PC-9 (cell line): ENCODE measurements at regions of chr7 and their contacts with region 1.

Region 1: DNA sequence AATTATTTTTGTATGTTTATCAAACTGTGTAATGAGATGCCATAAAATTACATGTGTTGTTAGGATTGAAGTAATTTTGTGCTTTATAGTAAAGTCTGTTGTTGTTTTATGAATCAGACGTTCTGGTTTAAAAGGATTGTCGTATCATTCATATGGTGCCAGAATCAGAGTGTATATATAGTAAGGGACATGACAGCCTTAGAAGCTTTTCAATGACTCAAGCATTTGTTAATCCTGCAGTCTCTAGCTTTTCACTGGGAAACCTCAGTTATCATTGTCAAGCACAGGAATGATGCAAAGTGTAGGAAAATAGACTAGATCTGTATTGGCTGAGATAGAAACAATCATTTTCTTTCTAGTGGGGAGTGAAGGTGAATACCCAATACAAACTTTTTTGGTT is 57.5 kb downstream of the TRRAP start:
- DNase-seq: no peak
- H3K4me3 ChIP-seq: no peak overlapping the region
- H3K27ac ChIP-seq: no peak overlapping the region
- H3K4me1 ChIP-seq: no peaks in the 10 kb centered on the region
- H3K27me3 ChIP-seq: no peaks in the 10 kb centered on the region
- CTCF ChIP-seq: no peak

Region 2: DNA sequence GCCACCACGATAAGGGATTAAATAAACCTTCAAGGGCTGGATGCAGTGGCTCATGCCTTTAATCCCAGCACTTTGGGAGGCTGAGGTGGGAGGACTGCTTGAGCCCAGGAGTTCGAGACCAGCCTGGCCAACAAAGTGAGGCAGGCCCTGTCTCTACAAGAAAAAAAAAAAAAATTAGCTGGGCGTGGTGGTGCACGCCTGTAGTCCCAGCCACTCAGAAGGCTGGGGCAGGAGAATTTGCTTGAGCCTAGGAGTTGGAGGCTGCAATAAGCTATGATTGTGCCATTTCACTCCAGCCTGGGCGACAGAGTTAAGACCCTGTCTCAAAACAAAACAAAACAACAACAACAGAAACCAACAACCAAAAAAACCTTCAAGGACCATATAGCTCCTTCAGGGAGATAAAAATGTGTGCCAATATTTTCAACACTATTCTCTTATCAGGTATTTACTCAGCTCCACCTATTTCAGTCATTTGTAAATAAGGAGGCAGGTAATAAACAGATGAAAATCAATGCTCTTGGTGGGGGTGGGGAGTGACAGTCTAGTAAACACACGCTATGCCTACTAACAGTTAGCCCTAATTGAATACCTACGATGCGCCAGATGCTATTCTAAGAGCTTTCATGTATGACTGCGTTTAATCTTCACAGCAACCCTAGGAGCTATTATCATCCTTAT is 548.1 kb before region 1 on chr7:
- CTCF ChIA-PET with region 1: no interaction called
- POLR2A ChIA-PET with region 1: interaction called, 10 read pairs
- intact Hi-C with region 1: no loop called
- DNase-seq: no peak
- H3K4me3 ChIP-seq: no peak overlapping the region
- H3K27ac ChIP-seq: no peak overlapping the region
- H3K4me1 ChIP-seq: no peaks in the 10 kb centered on the region
- H3K27me3 ChIP-seq: no peaks in the 10 kb centered on the region
- CTCF ChIP-seq: no peak

Region 3: DNA sequence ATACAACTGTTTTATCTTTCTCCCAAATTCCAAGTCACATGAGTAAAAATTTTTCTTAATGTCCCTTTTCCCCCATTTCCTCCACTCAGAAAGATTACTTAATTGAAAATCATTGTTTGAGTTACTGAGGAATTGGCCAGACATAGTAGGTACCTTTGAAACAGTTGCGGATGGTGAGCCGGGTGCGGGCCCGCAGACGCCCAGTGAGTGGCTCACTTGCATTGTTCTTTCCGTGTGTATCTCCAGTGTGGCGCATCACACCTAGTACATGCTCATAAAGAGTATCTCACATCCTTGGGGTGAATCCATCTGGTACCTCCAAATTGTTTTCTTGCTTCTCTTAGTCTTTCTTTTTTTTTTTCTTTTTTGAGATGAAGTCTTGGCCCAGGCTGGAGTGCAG is 43.2 kb before region 1 on chr7:
- CTCF ChIA-PET with region 1: interaction called, 3 read pairs
- POLR2A ChIA-PET with region 1: interaction called, 10 read pairs
- intact Hi-C with region 1: loop called (anchors 10 kb)
- DNase-seq: no peak
- H3K4me3 ChIP-seq: no peak overlapping the region
- H3K27ac ChIP-seq: no peak overlapping the region
- H3K4me1 ChIP-seq: no peaks in the 10 kb centered on the region
- H3K27me3 ChIP-seq: no peaks in the 10 kb centered on the region
- CTCF ChIP-seq: no peak

Region 4: GRCh38 chr7:98922393-98923187 is 13.2 kb before region 1 on chr7:
- CTCF ChIA-PET with region 1: no interaction called
- POLR2A ChIA-PET with region 1: no interaction called
- intact Hi-C with region 1: no loop called
- DNase-seq: no peak
- H3K4me3 ChIP-seq: no peak overlapping the region
- H3K27ac ChIP-seq: no peak overlapping the region
- H3K4me1 ChIP-seq: no peaks in the 10 kb centered on the region
- H3K27me3 ChIP-seq: no peaks in the 10 kb centered on the region
- CTCF ChIP-seq: no peak